Aorta (tissue), 5 donors: ENCODE measurements at regions of chr5 and their contacts with region 1.

Region 1: DNA sequence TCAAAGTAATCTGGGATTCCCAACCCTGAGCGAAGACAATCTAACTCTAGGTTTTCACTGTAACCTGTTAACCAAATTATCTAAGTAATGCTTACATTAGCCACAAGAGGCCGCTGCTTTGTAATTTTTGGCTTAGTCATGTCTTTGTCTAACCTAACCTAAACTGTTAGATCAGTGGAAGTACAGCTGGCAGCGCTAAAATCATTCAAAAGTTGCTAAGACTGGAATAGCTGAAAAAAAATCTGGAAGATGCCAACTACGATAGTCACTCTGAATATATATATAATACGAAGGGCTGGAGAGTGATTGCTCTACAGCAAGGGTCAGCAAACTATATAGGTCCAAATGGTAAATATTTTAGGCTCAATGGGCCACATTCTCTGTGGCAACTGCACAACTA is 60.2 kb downstream of the FBXO38 start:
- DNase-seq: no peak
- ATAC-seq: peak; percentile 88
- H3K4me3 ChIP-seq: no peak overlapping the region
- H3K27ac ChIP-seq: no peak overlapping the region
- H3K4me1 ChIP-seq: no peaks in the 10 kb centered on the region
- H3K27me3 ChIP-seq: no peaks in the 10 kb centered on the region

Region 2: DNA sequence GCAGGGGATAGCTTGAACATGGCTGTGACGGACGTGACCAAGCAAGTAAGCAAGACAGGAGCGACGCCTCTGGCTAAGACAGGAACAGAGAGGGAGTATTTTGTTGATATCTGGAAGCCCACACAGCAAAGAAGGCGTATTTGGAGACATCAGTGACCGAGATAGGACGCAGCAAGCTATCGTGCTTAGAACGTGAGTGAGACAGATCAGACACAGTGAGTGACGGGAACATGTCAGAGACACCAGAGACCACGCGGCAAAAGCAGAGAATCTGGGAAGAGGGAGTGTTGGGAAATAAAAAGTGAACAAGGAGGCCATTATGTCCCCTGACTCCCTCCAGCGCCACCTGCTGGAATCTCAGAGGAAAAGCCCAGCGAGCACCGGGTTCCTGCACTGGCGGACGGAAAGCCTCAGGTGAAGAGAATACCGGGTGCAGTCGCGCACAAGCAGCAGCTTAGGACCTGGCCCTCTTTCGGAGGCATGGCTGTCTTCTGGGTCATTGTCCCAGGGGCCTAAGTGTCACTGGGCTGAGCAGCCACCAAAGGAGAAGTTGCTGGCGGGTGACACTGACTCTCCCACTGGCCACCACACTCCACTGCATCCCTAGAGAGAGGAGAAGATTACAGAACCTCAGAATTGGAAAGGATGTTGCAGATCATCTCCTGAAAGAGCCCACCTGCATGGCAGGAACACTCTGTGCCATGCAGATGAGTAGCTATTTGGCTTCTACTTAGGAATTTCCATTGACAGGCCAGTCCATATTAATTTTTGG is 38.9 kb after region 1 on chr5:
- intact Hi-C with region 1: loop called in 1 of 2 experiments (anchors 5 kb)
- DNase-seq: peak; percentile 71 to 79
- ATAC-seq: peak; percentile 67
- H3K4me3 ChIP-seq: no peak overlapping the region
- H3K27ac ChIP-seq: no peak overlapping the region
- H3K4me1 ChIP-seq: peaks cover 0 to 2% of the 10 kb centered on the region in 2 donors
- H3K27me3 ChIP-seq: no peaks in the 10 kb centered on the region

Region 3: GRCh38 chr5:149035372-149035790 is 591.4 kb after region 1 on chr5:
- intact Hi-C with region 1: loop called in 1 of 2 experiments (anchors 10 kb)
- DNase-seq: peak; percentile 77 to 87
- ATAC-seq: peak; percentile 84
- H3K4me3 ChIP-seq: no peak overlapping the region
- H3K27ac ChIP-seq: no peak overlapping the region
- H3K4me1 ChIP-seq: no peaks in the 10 kb centered on the region
- H3K27me3 ChIP-seq: no peaks in the 10 kb centered on the region

Region 4: DNA sequence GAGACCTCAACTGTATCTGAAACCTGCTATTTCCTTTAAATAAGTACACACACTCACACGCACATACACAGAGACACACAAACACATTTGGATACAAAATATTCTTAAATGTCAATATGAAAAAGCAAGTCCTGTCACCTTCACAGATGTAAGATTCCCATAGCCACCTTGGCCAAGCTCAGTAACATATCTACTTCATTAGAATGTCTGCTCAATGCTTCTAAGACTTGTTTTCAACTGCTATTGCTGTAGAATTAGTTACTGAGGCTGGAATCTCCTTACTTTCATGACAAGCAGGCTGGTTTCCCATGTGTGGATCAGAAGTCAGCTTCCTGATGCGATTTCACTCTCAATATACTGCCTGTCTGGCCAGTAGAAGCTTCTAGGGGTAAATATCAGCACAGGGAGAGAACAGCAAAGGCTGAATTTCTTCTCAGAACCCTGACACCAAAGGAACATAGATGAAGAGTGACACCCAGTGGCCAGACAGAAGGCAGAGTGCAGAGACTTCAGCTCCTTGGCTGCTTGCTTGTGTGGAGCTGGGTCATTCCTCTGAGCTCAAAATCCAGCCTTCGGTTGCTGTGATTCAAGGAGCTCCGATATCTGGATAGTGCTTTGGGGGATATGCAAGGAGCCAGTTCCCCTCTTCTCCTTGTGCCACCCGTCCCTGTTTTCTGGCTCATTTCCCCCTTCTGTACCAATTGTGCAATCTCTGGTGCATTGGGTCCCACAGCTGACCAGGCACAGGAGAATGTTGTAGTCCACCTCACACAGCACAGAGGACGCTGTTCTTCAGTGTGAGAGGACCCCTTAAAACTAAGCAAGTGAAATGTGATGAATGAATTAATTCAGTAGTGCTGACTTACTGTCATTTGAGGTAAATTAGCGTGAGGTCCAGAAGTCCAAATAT is 670.7 kb after region 1 on chr5:
- intact Hi-C with region 1: loop called in 1 of 2 experiments (anchors 10 kb)
- DNase-seq: peak in 1 of 2 donors; percentile 62
- ATAC-seq: peak; percentile 87
- H3K4me3 ChIP-seq: no peak overlapping the region
- H3K27ac ChIP-seq: no peak overlapping the region
- H3K4me1 ChIP-seq: no peaks in the 10 kb centered on the region
- H3K27me3 ChIP-seq: no peaks in the 10 kb centered on the region

Region 5: GRCh38 chr5:149852641-149853330 is 1408.8 kb after region 1 on chr5:
- intact Hi-C with region 1: no loop called
- DNase-seq: peak; percentile 81 to 87
- ATAC-seq: peak; percentile 71
- H3K4me3 ChIP-seq: no peak overlapping the region
- H3K27ac ChIP-seq: no peak overlapping the region
- H3K4me1 ChIP-seq: no peaks in the 10 kb centered on the region
- H3K27me3 ChIP-seq: no peaks in the 10 kb centered on the region